Gastrocnemius medialis (tissue), 4 donors: ENCODE measurements at regions of chr2 and their contacts with region 1.

Region 1: GRCh38 chr2:86140969-86141392 is 34.9 kb downstream of the PTCD3 start:
- DNase-seq: peak; percentile 69 to 85
- ATAC-seq: peak; percentile 97 to 98
- H3K4me3 ChIP-seq: no peak overlapping the region
- H3K27ac ChIP-seq: peak overlapping the region; percentile 79 to 87 (median 84)
- H3K4me1 ChIP-seq: peaks cover 6 to 10% of the 10 kb centered on the region in 2 donors
- H3K27me3 ChIP-seq: no peaks in the 10 kb centered on the region
- CTCF ChIP-seq: no peak
- POLR2A ChIP-seq: no peak

Region 2: DNA sequence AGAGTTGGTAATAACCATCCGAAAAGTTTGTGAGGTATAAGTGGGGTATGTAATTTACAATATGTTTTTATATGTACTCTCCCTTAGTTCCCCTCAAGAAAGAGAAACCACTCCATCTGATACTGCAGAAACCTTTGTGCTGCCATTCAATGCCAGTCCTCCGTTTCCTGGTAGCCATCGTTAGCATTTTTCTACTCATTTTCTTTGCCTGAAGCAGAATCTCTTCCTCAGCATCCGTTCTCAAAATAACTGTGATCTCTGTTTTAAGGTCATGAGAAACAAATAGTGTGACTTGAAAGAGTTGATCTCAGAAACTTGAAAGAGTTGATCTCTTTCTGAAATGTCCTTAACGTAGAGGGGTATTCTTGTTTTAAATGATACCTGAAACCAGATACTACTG is 34.0 kb before region 1 on chr2:
- in situ Hi-C with region 1: no loop called
- intact Hi-C with region 1: loop called (anchors 1 kb)
- DNase-seq: no peak
- ATAC-seq: no peak
- H3K4me3 ChIP-seq: peak overlapping the region; percentile 75 to 96 (median 92)
- H3K27ac ChIP-seq: peak overlapping the region; percentile 89 to 96 (median 93)
- H3K4me1 ChIP-seq: peaks cover 27 to 36% of the 10 kb centered on the region in 2 donors
- H3K27me3 ChIP-seq: no peaks in the 10 kb centered on the region
- CTCF ChIP-seq: no peak
- POLR2A ChIP-seq: no peak

Region 3: GRCh38 chr2:86118133-86118532 is 22.8 kb before region 1 on chr2:
- in situ Hi-C with region 1: no loop called
- intact Hi-C with region 1: no loop called
- DNase-seq: no peak
- ATAC-seq: no peak
- H3K4me3 ChIP-seq: no peak overlapping the region
- H3K27ac ChIP-seq: no peak overlapping the region
- H3K4me1 ChIP-seq: no peaks in the 10 kb centered on the region
- H3K27me3 ChIP-seq: no peaks in the 10 kb centered on the region
- CTCF ChIP-seq: no peak
- POLR2A ChIP-seq: no peak

Region 4: DNA sequence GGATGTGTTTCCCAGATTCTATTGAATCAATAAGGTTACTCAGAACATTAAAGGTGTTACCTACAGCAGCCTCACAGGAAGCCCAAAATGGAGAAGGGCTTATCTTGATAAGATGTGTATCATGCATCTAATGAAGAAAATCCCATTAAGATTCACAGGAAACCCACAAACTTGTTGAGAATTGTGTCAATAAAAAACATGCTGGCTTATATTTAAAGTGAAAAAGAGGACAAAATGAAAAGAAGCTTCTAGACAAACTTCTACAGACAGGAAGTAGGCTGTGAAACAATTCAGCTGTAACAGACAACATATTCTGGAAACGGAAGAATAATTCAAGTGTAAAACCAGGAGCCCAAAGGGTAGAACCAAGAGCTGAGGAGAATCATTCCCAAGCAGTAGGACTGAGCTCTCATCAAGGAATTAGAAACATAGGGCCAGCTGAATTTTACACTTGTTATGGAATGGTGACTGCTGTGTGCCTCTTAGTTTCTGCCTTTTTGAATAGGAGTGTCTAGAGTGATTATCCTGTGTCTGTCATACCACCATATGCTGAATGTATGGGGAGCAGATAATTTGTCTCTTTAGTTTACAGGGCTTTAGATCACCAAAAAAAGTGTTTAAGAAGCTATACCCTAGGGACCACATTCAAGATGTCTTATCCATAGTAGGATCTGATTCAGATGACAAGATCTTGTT is 44.7 kb after region 1 on chr2:
- in situ Hi-C with region 1: no loop called
- intact Hi-C with region 1: loop called (anchors 1 kb)
- DNase-seq: no peak
- ATAC-seq: no peak
- H3K4me3 ChIP-seq: no peak overlapping the region
- H3K27ac ChIP-seq: peak overlapping the region; percentile 72 to 80 (median 74)
- H3K4me1 ChIP-seq: peaks cover 56 to 69% of the 10 kb centered on the region in 2 donors
- H3K27me3 ChIP-seq: no peaks in the 10 kb centered on the region
- CTCF ChIP-seq: no peak
- POLR2A ChIP-seq: no peak

Region 5: GRCh38 chr2:86201671-86202335 is 60.8 kb after region 1 on chr2:
- in situ Hi-C with region 1: no loop called
- intact Hi-C with region 1: no loop called
- DNase-seq: no peak
- ATAC-seq: no peak
- H3K4me3 ChIP-seq: no peak overlapping the region
- H3K27ac ChIP-seq: peak overlapping the region; percentile 61 to 86 (median 76)
- H3K4me1 ChIP-seq: peaks cover 35 to 37% of the 10 kb centered on the region in 2 donors
- H3K27me3 ChIP-seq: no peaks in the 10 kb centered on the region
- CTCF ChIP-seq: no peak
- POLR2A ChIP-seq: no peak